CD8-positive, alpha-beta memory T cell (primary cell): ENCODE measurements at regions of chr14 and their contacts with region 1.

Region 1: DNA sequence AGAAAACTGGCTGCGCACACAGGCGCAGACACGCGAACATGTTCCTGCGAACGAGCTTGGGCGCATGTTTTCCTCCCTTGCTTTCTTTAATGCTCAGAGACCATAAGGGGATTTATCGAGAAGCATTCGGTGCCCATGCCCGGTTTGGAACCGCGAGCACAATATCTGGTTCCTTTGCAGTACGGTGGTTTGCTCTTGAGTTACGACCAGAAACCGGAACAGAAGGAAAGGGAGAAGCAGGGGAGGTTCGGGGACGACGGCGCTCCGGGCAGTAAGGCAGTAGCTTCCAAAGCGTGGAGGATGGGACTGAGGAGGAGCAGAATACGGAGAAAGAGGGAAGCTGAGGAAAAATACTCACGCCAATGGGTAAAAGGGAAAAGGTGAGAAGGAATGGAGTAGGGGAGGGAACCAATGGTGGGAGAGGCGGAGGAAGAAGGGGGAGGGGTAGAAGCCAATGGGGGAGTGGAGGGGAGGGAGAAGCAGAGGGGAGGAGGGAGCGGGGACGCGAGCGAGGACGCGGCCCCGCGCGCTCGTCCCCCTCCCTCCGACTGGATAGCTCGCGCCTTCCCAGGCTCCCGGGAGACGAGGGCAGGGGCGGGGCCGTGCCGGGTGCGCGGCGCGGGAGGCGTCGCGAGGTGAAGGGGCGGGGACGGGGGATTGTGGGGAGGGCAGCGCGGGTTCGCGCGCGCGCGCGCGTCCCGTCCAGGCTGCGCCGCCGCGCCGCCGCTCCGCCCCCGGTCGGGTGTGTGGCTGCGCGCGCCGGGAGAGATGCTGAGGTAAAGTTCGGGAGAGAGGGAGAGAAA is 625 bp upstream of the ARHGAP5 start:
- DNase-seq: peak; percentile 66 to 79 (median 77)
- H3K4me3 ChIP-seq: peak overlapping the region; percentile 85
- H3K4me3 Mint-ChIP-seq: peak overlapping the region; percentile 91 to 100 (median 97)
- H3K27ac ChIP-seq: peak overlapping the region; percentile 67
- H3K27ac Mint-ChIP-seq: peak overlapping the region; percentile 82 to 99 (median 91)
- H3K4me1 ChIP-seq: peaks cover 14% of the 10 kb centered on the region
- H3K4me1 Mint-ChIP-seq: peaks cover 37 to 49% (median 42%) of the 10 kb centered on the region in 3 donors
- H3K27me3 ChIP-seq: no peaks in the 10 kb centered on the region
- H3K27me3 Mint-ChIP-seq: peaks cover 3% of the 10 kb centered on the region in 2 donors

Region 2: GRCh38 chr14:32043624-32044023 is 32.9 kb before region 1 on chr14:
- CTCF ChIA-PET with region 1: no interaction called
- POLR2A ChIA-PET with region 1: no interaction called
- DNase-seq: no peak
- H3K4me3 ChIP-seq: no peak overlapping the region
- H3K4me3 Mint-ChIP-seq: no peak overlapping the region
- H3K27ac ChIP-seq: no peak overlapping the region
- H3K27ac Mint-ChIP-seq: no peak overlapping the region
- H3K4me1 ChIP-seq: no peaks in the 10 kb centered on the region
- H3K4me1 Mint-ChIP-seq: no peaks in the 10 kb centered on the region
- H3K27me3 ChIP-seq: no peaks in the 10 kb centered on the region
- H3K27me3 Mint-ChIP-seq: peaks cover 7 to 36% of the 10 kb centered on the region in 2 donors

Region 3: GRCh38 chr14:32202998-32203882 is 126.8 kb after region 1 on chr14 and contains the start of gene RNU6-8:
- CTCF ChIA-PET with region 1: interaction called, 18 read pairs
- POLR2A ChIA-PET with region 1: interaction called, 21 read pairs
- DNase-seq: peak; percentile 70 to 95 (median 88)
- H3K4me3 ChIP-seq: peak within 1 kb of the TSS; percentile 85
- H3K4me3 Mint-ChIP-seq: peak within 1 kb of the TSS; percentile 85 to 97 (median 92)
- H3K27ac ChIP-seq: peak within 1 kb of the TSS; percentile 97
- H3K27ac Mint-ChIP-seq: peak within 1 kb of the TSS; percentile 95 to 100 (median 99)
- H3K4me1 ChIP-seq: peaks cover 16% of the 10 kb centered on the region
- H3K4me1 Mint-ChIP-seq: peaks cover 29 to 43% (median 40%) of the 10 kb centered on the region in 3 donors
- H3K27me3 ChIP-seq: no peaks in the 10 kb centered on the region
- H3K27me3 Mint-ChIP-seq: peaks cover 3 to 10% of the 10 kb centered on the region in 2 donors
- total RNA-seq, gene RNU6-8: not detected

Region 4: GRCh38 chr14:32244404-32244803 is 167.9 kb after region 1 on chr14:
- CTCF ChIA-PET with region 1: interaction called, 11 read pairs
- POLR2A ChIA-PET with region 1: no interaction called
- DNase-seq: no peak
- H3K4me3 ChIP-seq: no peak overlapping the region
- H3K4me3 Mint-ChIP-seq: no peak overlapping the region
- H3K27ac ChIP-seq: no peak overlapping the region
- H3K27ac Mint-ChIP-seq: no peak overlapping the region
- H3K4me1 ChIP-seq: no peaks in the 10 kb centered on the region
- H3K4me1 Mint-ChIP-seq: no peaks in the 10 kb centered on the region
- H3K27me3 ChIP-seq: no peaks in the 10 kb centered on the region
- H3K27me3 Mint-ChIP-seq: peaks cover 9 to 17% of the 10 kb centered on the region in 2 donors